Left ventricle myocardium inferior (tissue), 1 donor: ENCODE measurements at regions of chr11 and their contacts with region 1.

Region 1: GRCh38 chr11:112555491-112556364 is 295.1 kb upstream of the PLET1 start:
- DNase-seq: peak; percentile 48
- H3K4me3 ChIP-seq: no peak overlapping the region
- H3K27ac ChIP-seq: no peak overlapping the region
- H3K4me1 ChIP-seq: peaks cover 6% of the 10 kb centered on the region
- H3K27me3 ChIP-seq: no peaks in the 10 kb centered on the region
- CTCF ChIP-seq: peak; percentile 77

Region 2: GRCh38 chr11:112289588-112290492 is 265.9 kb before region 1 on chr11:
- intact Hi-C with region 1: loop called (anchors 10 kb)
- DNase-seq: peak; percentile 87
- H3K4me3 ChIP-seq: peak overlapping the region; percentile 78
- H3K27ac ChIP-seq: peak overlapping the region; percentile 84
- H3K4me1 ChIP-seq: peaks cover 44% of the 10 kb centered on the region
- H3K27me3 ChIP-seq: no peaks in the 10 kb centered on the region
- CTCF ChIP-seq: peak; percentile 94